ENCODE measurements at regions of chr7 and their contacts with region 1.

Region 1: GRCh38 chr7:3888096-3888495 is 587.0 kb downstream of the SDK1 start:
- DNase-seq: no peak
- H3K4me3 ChIP-seq: no peak overlapping the region
- H3K4me3 Mint-ChIP-seq: no peak overlapping the region
- H3K27ac Mint-ChIP-seq: no peak overlapping the region
- H3K4me1 ChIP-seq: no peaks in the 10 kb centered on the region
- H3K4me1 Mint-ChIP-seq: no peaks in the 10 kb centered on the region
- H3K27me3 ChIP-seq: no peaks in the 10 kb centered on the region
- H3K27me3 Mint-ChIP-seq: no peaks in the 10 kb centered on the region
- CTCF ChIP-seq: no peak

Region 2: GRCh38 chr7:3862774-3863173 is 25.3 kb before region 1 on chr7:
- CTCF ChIA-PET with region 1: no interaction called
- POLR2A ChIA-PET with region 1: no interaction called
- intact Hi-C with region 1: loop called (anchors 1 kb)
- DNase-seq: no peak
- H3K4me3 ChIP-seq: no peak overlapping the region
- H3K4me3 Mint-ChIP-seq: no peak overlapping the region
- H3K27ac Mint-ChIP-seq: no peak overlapping the region
- H3K4me1 ChIP-seq: no peaks in the 10 kb centered on the region
- H3K4me1 Mint-ChIP-seq: no peaks in the 10 kb centered on the region
- H3K27me3 ChIP-seq: no peaks in the 10 kb centered on the region
- H3K27me3 Mint-ChIP-seq: no peaks in the 10 kb centered on the region
- CTCF ChIP-seq: no peak

Region 3: GRCh38 chr7:4006687-4007086 is 118.6 kb after region 1 on chr7:
- CTCF ChIA-PET with region 1: no interaction called
- POLR2A ChIA-PET with region 1: no interaction called
- intact Hi-C with region 1: no loop called
- DNase-seq: peak; percentile 67 to 72
- H3K4me3 ChIP-seq: no peak overlapping the region
- H3K4me3 Mint-ChIP-seq: no peak overlapping the region
- H3K27ac Mint-ChIP-seq: peak overlapping the region; percentile 81
- H3K4me1 ChIP-seq: 0 out of 2 replicates have a peak, but pooled peaks cover 9% of the 10 kb centered on the region
- H3K4me1 Mint-ChIP-seq: peaks cover 8% of the 10 kb centered on the region
- H3K27me3 ChIP-seq: no peaks in the 10 kb centered on the region
- H3K27me3 Mint-ChIP-seq: no peaks in the 10 kb centered on the region
- CTCF ChIP-seq: no peak